ENCODE measurements at regions of chr15 and their contacts with region 1.

Region 1: GRCh38 chr15:99096894-99097426 is 7.9 kb upstream of the SYNM start:
- DNase-seq: no peak
- ATAC-seq: no peak
- H3K4me3 ChIP-seq: no peak overlapping the region
- H3K4me3 Mint-ChIP-seq: no peak overlapping the region
- H3K27ac ChIP-seq: no peak overlapping the region
- H3K27ac Mint-ChIP-seq: no peak overlapping the region
- H3K4me1 ChIP-seq: peaks cover 9% of the 10 kb centered on the region
- H3K4me1 Mint-ChIP-seq: no peaks in the 10 kb centered on the region
- H3K27me3 ChIP-seq: peaks cover 15 to 29% of the 10 kb centered on the region in 2 experiments
- H3K27me3 Mint-ChIP-seq: peaks cover 40% of the 10 kb centered on the region
- CTCF ChIP-seq: no peak

Region 2: DNA sequence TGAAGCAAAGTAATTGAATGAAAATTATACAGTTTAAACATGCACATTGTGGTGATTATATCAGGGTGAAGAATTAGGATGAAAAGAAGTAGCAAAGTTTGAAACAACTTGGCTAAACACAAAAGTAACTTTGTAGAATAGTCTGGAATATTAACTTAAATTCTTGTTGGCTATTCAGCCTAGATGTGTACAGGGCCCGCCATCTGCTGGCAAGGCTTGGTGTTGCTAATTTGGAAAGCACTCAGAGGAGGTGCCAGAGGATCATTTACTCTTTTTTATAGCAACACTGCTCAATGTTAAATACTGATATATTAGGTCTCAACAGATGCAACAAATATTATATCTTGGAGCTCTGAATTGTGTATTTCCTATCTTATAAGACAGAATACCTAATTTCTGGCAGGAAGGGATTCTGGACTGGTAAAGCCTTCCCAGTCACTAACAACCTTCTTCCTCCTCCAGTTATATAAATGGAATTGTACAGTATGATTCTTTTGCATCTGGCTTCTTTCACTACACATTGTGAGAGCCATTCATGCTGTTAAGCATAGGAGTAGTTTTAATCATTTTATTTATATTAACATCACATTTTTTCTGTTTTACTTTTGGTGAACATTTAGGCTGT is 116.3 kb after region 1 on chr15:
- CTCF ChIA-PET with region 1: interaction called, 4 read pairs
- POLR2A ChIA-PET with region 1: no interaction called
- intact Hi-C with region 1: loop called in 1 of 2 experiments (anchors 5 kb)
- DNase-seq: peak; percentile 15 to 64 (median 48)
- ATAC-seq: no peak
- H3K4me3 ChIP-seq: no peak overlapping the region
- H3K4me3 Mint-ChIP-seq: no peak overlapping the region
- H3K27ac ChIP-seq: no peak overlapping the region
- H3K27ac Mint-ChIP-seq: no peak overlapping the region
- H3K4me1 ChIP-seq: no peaks in the 10 kb centered on the region
- H3K4me1 Mint-ChIP-seq: no peaks in the 10 kb centered on the region
- H3K27me3 ChIP-seq: no peaks in the 10 kb centered on the region
- H3K27me3 Mint-ChIP-seq: no peaks in the 10 kb centered on the region
- CTCF ChIP-seq: peak; percentile 81

Measured in CD4-positive, alpha-beta T cell (primary cell).